A549 (cell line): ENCODE measurements at regions of chr9 and their contacts with region 1.

Region 1: GRCh38 chr9:134449221-134449894 is 123.1 kb downstream of the RXRA start:
- DNase-seq: peak; percentile 92 to 98
- ATAC-seq: peak; percentile 92 to 97
- H3K4me3 ChIP-seq: no peak overlapping the region
- H3K27ac ChIP-seq: peak overlapping the region in 1 of 2 experiments; percentile 65; a peak in 2 of 6 replicates
- H3K4me1 ChIP-seq: peaks cover 9% of the 10 kb centered on the region
- CTCF ChIP-seq: peak; percentile 81
- EP300 ChIP-seq: no peak
- POLR2A ChIP-seq: no peak
- RAD21 ChIP-seq: peak; percentile 97 to 99

Region 2: GRCh38 chr9:134381671-134382516 is 67.5 kb before region 1 on chr9:
- CTCF ChIA-PET with region 1: interaction called, 15 read pairs
- POLR2A ChIA-PET with region 1: no interaction called
- DNase-seq: no peak
- ATAC-seq: peak in 1 of 2 experiments; percentile 10; a peak in 1 of 6 replicates
- H3K4me3 ChIP-seq: no peak overlapping the region
- H3K27ac ChIP-seq: peak overlapping the region; percentile 93 to 97
- H3K4me1 ChIP-seq: peaks cover 95% of the 10 kb centered on the region
- CTCF ChIP-seq: peak; percentile 25
- EP300 ChIP-seq: no peak
- POLR2A ChIP-seq: no peak
- RAD21 ChIP-seq: no peak

Region 3: DNA sequence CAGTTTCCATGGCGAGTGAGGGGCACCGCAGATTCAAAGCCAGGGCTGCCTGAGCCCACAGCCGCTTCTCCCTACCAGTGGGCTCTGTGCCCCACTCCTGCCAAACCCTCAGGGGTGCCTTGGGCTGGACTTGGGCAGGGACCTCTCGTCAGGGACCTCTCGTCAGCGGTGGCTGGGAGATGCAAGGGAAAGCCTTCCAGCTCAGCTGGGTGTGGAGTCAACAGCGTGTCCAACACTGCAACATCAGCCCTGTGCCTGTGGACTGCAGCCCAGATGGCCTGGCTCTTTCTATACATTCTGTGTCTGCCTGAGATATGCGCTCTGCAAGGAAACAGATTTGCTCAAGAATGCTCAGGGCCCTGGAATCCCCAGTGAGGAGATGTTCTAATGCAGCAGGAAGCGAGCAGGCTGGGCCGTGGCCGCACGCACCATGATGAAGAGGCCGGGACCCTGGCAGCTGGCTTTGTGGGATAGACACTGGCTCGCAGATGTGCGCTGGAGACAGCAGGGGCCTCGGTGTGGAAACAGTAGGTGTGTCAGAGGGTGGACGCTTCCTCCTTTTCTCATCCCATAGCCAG is 107.2 kb after region 1 on chr9:
- CTCF ChIA-PET with region 1: interaction called, 11 read pairs
- POLR2A ChIA-PET with region 1: no interaction called
- DNase-seq: no peak
- ATAC-seq: no peak; a peak in 1 of 6 replicates
- H3K4me3 ChIP-seq: no peak overlapping the region
- H3K27ac ChIP-seq: no peak overlapping the region
- H3K4me1 ChIP-seq: peaks cover 17% of the 10 kb centered on the region
- CTCF ChIP-seq: no peak
- EP300 ChIP-seq: no peak
- POLR2A ChIP-seq: no peak
- RAD21 ChIP-seq: no peak

Region 4: GRCh38 chr9:134617961-134618832 is 168.8 kb after region 1 on chr9:
- CTCF ChIA-PET with region 1: interaction called, 18 read pairs
- POLR2A ChIA-PET with region 1: no interaction called
- DNase-seq: no peak
- ATAC-seq: no peak
- H3K4me3 ChIP-seq: no peak overlapping the region
- H3K27ac ChIP-seq: peak overlapping the region in 1 of 2 experiments; percentile 37; a peak in 1 of 6 replicates
- H3K4me1 ChIP-seq: peaks cover 22% of the 10 kb centered on the region
- CTCF ChIP-seq: no peak
- EP300 ChIP-seq: no peak
- POLR2A ChIP-seq: no peak
- RAD21 ChIP-seq: no peak

Region 5: DNA sequence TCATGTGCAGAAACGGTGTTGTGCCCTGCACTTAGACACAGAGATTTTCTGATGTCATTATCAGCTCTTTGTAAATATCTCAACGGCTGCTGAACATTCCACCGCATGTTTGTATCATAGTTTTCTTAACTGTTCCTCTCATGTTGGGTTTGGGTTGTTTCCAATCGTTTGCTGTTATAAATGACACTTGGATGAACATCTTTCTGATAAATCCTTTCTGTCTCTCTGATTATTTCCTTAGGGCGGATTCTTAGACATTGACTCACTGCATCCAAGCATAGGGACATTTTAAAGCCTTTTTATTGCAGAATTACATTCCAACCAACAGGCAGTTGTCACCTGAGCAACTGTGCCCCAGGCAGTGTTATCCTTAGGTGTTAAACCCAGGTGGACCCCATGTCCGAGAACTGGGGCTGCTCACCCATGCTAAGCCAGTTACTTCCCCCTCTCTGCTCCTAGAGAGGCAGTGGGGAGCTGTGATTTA is 220.7 kb after region 1 on chr9:
- CTCF ChIA-PET with region 1: interaction called, 26 read pairs
- POLR2A ChIA-PET with region 1: no interaction called
- DNase-seq: peak; percentile 63 to 79
- ATAC-seq: peak; percentile 76 to 81
- H3K4me3 ChIP-seq: no peak overlapping the region
- H3K27ac ChIP-seq: peak overlapping the region; percentile 81 to 89
- H3K4me1 ChIP-seq: peaks cover 42% of the 10 kb centered on the region
- CTCF ChIP-seq: no peak
- EP300 ChIP-seq: peak; percentile 69 to 78; a peak in 4 of 5 replicates
- POLR2A ChIP-seq: no peak
- RAD21 ChIP-seq: peak in 1 of 2 experiments; percentile 10; a peak in 1 of 5 replicates

Region 6: GRCh38 chr9:134725605-134725940 is 276.2 kb after region 1 on chr9:
- CTCF ChIA-PET with region 1: interaction called, 39 read pairs
- POLR2A ChIA-PET with region 1: no interaction called
- DNase-seq: no peak
- ATAC-seq: no peak
- H3K4me3 ChIP-seq: no peak overlapping the region
- H3K27ac ChIP-seq: no peak overlapping the region
- H3K4me1 ChIP-seq: no peaks in the 10 kb centered on the region
- CTCF ChIP-seq: no peak
- EP300 ChIP-seq: no peak
- POLR2A ChIP-seq: no peak
- RAD21 ChIP-seq: no peak